Prostate gland (tissue), 2 donors: ENCODE measurements at regions of chr14 and their contacts with region 1.

Region 1: DNA sequence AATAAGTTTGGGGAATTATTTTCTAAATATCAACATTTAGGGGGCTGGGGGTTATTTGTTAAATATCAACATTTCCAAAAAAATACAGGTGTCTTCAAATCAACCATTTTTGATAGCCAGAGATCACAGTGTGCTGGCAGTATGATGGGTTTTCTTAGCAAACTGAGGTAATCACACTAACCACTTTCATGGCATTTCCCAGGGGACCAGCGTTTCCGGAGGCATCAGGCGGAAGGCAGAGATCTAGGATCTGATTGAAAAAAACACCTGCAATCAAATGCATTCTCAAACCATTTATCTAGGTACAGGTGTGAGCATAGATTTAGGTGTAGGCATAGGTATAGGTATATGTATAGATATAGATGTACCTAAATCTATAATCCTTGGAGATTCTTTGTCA is 34.6 kb downstream of the GLRX5 start:
- DNase-seq: no peak
- H3K4me3 ChIP-seq: no peak overlapping the region
- H3K27ac ChIP-seq: no peak overlapping the region
- H3K4me1 ChIP-seq: no peaks in the 10 kb centered on the region
- H3K27me3 ChIP-seq: no peaks in the 10 kb centered on the region
- CTCF ChIP-seq: no peak
- POLR2A ChIP-seq: no peak

Region 2: DNA sequence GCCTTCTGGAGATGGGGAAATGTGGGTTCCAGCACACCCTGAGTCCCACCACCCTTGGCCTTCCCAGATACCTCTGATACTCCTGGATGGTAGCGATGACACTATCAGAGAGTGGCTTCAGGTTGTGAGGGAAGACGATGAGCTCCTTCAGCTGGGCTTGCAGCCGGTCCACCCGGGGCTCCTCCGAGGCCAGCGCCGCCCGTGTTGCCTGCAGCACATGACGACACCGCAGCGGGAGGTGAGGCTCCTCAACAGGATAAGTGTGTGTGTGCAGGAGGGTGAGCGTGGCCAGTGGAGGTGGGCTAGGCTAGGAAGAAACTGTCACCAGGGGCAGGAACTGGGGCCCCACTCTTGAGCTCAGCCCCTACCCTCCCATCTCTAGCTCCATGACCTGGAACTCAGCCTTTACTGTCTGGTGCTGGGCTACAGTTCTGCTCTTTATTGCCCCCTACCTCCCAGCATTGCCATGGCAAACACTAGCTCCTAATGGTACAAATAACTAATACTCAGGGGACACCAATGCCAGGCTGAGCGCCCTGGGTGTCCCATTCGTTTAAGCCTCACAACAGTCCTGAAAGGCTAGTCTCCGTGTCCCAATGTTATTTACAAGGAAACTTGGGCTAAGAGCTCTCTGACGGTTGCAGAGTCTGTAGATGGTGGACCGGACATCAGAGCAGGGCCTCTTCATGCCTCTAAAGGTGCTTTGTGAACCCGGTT is 117.1 kb before region 1 on chr14:
- intact Hi-C with region 1: no loop called
- DNase-seq: no peak
- H3K4me3 ChIP-seq: no peak overlapping the region
- H3K27ac ChIP-seq: no peak overlapping the region
- H3K4me1 ChIP-seq: no peaks in the 10 kb centered on the region
- H3K27me3 ChIP-seq: no peaks in the 10 kb centered on the region
- CTCF ChIP-seq: no peak
- POLR2A ChIP-seq: no peak

Region 3: DNA sequence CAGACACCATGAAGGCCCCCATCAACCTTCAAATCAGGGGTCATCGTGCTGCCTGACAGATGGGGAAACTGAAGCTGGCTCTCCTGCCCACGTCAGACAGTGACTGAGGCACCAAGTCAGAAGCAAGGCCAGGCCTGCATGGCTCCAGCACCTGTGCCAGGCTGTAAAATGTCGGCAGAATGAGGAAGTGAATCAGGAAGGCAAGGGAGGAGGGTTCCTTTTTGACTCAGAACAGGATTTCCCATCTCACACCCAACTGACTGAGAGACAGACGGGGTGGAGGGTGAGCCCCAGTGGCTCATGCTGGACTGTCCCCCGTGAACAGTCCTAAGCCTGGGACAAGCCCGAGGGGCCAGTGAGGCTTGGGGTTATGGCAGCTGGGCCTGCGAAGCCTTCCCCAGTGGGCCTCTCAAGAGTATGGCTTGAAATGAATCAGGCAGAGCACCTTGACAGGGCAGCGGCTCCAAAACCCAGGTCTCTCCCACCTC is 73.9 kb before region 1 on chr14:
- intact Hi-C with region 1: no loop called
- DNase-seq: no peak
- H3K4me3 ChIP-seq: no peak overlapping the region
- H3K27ac ChIP-seq: no peak overlapping the region
- H3K4me1 ChIP-seq: peaks cover 6% of the 10 kb centered on the region
- H3K27me3 ChIP-seq: no peaks in the 10 kb centered on the region
- CTCF ChIP-seq: no peak
- POLR2A ChIP-seq: no peak

Region 4: GRCh38 chr14:95774265-95775160 is 205.1 kb after region 1 on chr14:
- intact Hi-C with region 1: loop called (anchors 5 kb)
- DNase-seq: peak; percentile 30
- H3K4me3 ChIP-seq: no peak overlapping the region
- H3K27ac ChIP-seq: no peak overlapping the region
- H3K4me1 ChIP-seq: no peaks in the 10 kb centered on the region
- H3K27me3 ChIP-seq: no peaks in the 10 kb centered on the region
- CTCF ChIP-seq: peak; percentile 73 to 85 (median 76)
- POLR2A ChIP-seq: no peak

Region 5: DNA sequence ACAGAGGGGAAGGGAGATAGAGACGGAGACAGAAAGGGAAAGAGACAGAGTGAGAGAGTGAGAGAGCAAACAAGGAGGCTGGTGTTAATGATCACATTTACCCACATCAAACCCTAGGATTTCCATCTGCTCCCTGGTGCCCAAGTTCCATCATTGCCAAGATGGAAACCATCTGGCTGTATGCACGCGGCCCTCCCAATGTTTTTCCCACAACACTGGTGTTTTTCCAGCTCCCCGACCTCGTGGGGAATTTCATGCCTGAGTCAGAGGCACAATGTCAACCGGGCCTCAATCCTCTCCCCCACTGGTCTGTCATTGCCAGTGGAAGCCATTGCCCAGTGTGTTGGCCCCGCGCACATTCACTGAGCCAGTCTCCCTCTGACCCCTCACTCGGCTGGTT is 615.3 kb after region 1 on chr14:
- intact Hi-C with region 1: no loop called
- DNase-seq: no peak
- H3K4me3 ChIP-seq: no peak overlapping the region
- H3K27ac ChIP-seq: no peak overlapping the region
- H3K4me1 ChIP-seq: no peaks in the 10 kb centered on the region
- H3K27me3 ChIP-seq: peaks cover 2% of the 10 kb centered on the region
- CTCF ChIP-seq: no peak
- POLR2A ChIP-seq: no peak